AG04449 (cell line): ENCODE measurements at regions of chr16 and their contacts with region 1.

Region 1: DNA sequence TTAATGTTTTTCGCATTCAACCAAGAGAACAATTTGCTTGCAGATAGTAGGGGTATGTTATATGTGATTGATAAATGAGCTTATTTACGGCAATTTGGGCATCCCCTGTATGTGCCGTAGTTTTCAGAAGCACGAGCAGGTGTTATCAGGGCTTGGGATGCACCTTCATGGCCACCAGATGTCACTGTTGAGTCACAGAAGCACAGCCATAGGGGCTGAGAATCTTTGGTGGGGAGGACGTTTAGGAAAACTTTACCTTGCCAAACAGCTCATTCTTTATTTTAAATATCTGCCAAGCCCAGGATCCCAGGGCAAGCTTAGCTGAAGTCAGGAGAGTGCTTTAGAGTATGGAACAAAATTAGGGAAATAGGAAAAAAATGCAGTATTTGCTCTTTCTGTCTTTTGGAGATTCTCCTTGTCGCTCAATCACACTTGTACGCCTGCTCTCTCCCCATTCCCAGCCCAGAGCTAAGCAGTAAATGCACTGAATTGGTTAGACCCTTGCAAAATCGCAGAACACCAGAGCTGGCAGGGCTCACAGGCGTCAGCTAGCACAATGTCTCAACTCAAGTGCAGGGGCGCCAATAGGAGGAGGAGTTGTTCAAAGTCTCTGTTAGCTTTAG is 93.6 kb upstream of the MPHOSPH6 start:
- DNase-seq: no peak
- H3K4me3 ChIP-seq: no peak overlapping the region
- CTCF ChIP-seq: peak; percentile 84

Region 2: GRCh38 chr16:82280867-82281266 is 17.2 kb after region 1 on chr16:
- CTCF ChIA-PET with region 1: interaction called, 12 read pairs
- POLR2A ChIA-PET with region 1: no interaction called
- DNase-seq: no peak
- H3K4me3 ChIP-seq: no peak overlapping the region
- CTCF ChIP-seq: no peak

Region 3: GRCh38 chr16:82456683-82457082 is 193.1 kb after region 1 on chr16:
- CTCF ChIA-PET with region 1: interaction called, 30 read pairs
- POLR2A ChIA-PET with region 1: no interaction called
- DNase-seq: no peak
- H3K4me3 ChIP-seq: no peak overlapping the region
- CTCF ChIP-seq: peak; percentile 79

Region 4: DNA sequence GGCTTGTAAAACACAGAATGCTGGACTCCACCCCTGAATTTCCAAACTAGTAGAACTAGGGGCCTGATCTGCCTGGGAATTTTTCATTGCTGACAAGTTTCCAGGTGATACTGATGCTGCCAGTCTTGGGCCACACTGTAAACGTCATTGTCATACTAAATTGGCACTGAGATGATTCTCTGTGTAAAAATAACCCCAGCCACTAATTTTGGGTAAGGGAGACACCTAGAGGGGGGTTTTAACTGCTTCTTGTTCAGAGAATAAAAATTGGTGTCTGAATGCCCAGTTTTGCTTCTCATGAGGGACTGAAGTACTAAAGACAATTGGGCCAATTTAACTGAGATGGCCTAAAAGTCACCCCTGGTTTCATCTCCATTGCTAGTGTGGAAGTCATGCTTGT is 358.2 kb after region 1 on chr16:
- CTCF ChIA-PET with region 1: interaction called, 11 read pairs
- POLR2A ChIA-PET with region 1: no interaction called
- DNase-seq: no peak
- H3K4me3 ChIP-seq: no peak overlapping the region
- CTCF ChIP-seq: peak; percentile 4

Region 5: GRCh38 chr16:83100679-83101078 is 837.0 kb after region 1 on chr16:
- CTCF ChIA-PET with region 1: no interaction called
- POLR2A ChIA-PET with region 1: no interaction called
- DNase-seq: no peak
- H3K4me3 ChIP-seq: no peak overlapping the region
- CTCF ChIP-seq: no peak

Region 6: GRCh38 chr16:83441517-83441916 is 1177.9 kb after region 1 on chr16:
- CTCF ChIA-PET with region 1: interaction called, 48 read pairs
- POLR2A ChIA-PET with region 1: no interaction called
- DNase-seq: no peak
- H3K4me3 ChIP-seq: no peak overlapping the region
- CTCF ChIP-seq: no peak